Activated CD4-positive, alpha-beta memory T cell treated with anti-CD3 and anti-CD28 coated beads for 36 hours (primary cell): ENCODE measurements at regions of chr1 and their contacts with region 1.

Region 1: GRCh38 chr1:235910357-235911299 is 43.9 kb upstream of the LYST start:
- DNase-seq: peak; percentile 73
- H3K4me3 Mint-ChIP-seq: no peak overlapping the region
- H3K27ac Mint-ChIP-seq: peak overlapping the region; percentile 44
- H3K4me1 Mint-ChIP-seq: peaks cover 23% of the 10 kb centered on the region
- H3K27me3 Mint-ChIP-seq: no peaks in the 10 kb centered on the region

Region 2: DNA sequence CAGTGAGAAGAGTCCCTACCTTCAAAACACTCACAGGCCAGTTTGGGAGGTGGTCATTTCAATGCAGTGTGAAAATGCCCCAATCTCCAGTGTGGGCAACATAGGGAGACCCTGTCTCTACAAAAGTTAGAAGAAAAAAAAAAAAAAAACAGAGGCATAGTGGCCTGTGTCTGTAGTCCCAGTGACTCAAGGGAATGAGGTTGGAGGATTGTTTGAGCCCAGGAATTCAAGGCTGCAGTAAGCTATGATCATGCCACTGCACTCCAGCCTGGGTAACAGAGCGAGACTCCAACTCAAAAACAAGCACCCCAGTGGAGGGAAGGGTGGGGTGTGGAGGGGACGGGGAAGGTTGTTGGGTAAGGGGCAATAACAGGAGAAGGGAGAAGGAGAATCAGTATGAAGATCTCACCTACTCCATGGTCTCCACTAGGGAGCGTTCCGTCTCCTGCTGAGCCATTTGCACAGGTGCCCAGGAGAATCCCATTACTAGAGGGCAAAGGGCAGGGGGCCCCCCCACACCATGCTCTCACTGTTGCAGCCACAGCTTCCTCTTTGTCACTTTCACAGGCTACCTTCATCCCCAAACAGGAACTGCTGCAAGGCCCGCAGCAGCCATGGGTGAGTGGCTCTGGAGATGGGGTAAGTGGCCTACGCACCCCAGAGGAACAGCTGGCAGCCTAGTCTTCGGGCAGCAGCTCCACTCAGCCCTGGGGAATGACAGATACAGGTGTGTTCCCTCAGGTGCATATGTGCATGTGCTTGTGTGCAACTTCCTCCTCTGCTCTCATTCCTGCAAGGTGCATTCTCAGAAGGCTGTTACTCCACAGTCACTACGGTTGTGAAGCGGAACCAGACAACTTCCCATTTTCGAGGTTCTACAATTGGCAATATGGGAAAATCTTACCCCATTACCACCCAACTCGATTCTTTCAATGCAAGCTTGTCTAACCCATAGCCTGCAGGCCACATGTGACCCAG is 44.0 kb after region 1 on chr1:
- CTCF ChIA-PET with region 1: no interaction called
- POLR2A ChIA-PET with region 1: no interaction called
- intact Hi-C with region 1: loop called (anchors 1 kb)
- DNase-seq: peak; percentile 67
- H3K4me3 Mint-ChIP-seq: no peak overlapping the region
- H3K27ac Mint-ChIP-seq: no peak overlapping the region
- H3K4me1 Mint-ChIP-seq: peaks cover 33% of the 10 kb centered on the region
- H3K27me3 Mint-ChIP-seq: no peaks in the 10 kb centered on the region